ENCODE measurements at regions of chr16 and their contacts with region 1.

Region 1: DNA sequence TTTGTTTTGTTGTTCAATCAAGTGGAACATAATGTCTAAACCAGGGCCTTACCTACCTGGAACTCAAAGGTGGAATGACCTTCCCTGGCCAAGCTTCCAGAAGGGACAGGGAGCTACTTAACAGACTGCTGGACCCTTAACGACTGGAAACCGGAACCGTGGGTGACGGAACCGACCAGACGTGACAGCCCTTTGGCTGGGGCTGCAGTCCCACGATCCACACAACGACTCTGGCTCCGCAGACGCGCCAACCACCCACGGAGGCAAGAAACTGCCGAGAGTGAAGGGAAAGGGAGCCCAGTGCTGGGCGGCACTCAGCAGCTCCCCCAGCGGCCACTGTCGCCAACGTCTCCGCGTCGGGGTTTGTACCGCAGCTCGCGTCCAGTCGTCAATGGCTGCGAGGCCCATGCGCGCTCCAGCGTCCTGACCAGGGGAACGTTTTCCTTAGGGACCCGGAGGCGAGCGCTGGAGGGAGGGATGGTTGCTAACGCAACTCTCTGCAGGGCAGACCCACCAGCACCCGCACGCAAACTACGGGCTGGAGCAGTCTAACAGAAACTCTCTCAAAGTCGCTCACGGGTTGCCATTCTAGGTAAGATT is 5.5 kb upstream of the KIF22 start:
- DNase-seq: peak; percentile 84
- ATAC-seq: peak; percentile 91
- H3K4me3 Mint-ChIP-seq: peak overlapping the region; percentile 58
- H3K27ac Mint-ChIP-seq: peak overlapping the region; percentile 66
- H3K4me1 Mint-ChIP-seq: peaks cover 32% of the 10 kb centered on the region
- H3K27me3 Mint-ChIP-seq: no peaks in the 10 kb centered on the region
- CTCF ChIP-seq: peak; percentile 91

Region 2: GRCh38 chr16:29665294-29666077 is 119.5 kb before region 1 on chr16:
- CTCF ChIA-PET with region 1: no interaction called
- POLR2A ChIA-PET with region 1: no interaction called
- intact Hi-C with region 1: no loop called
- DNase-seq: peak; percentile 56
- ATAC-seq: no peak
- H3K4me3 Mint-ChIP-seq: peak overlapping the region; percentile 93
- H3K27ac Mint-ChIP-seq: peak overlapping the region; percentile 95
- H3K4me1 Mint-ChIP-seq: peaks cover 40% of the 10 kb centered on the region
- H3K27me3 Mint-ChIP-seq: no peaks in the 10 kb centered on the region
- CTCF ChIP-seq: no peak

Region 3: GRCh38 chr16:29738514-29738913 is 46.5 kb before region 1 on chr16:
- CTCF ChIA-PET with region 1: interaction called, 15 read pairs
- POLR2A ChIA-PET with region 1: interaction called, 8 read pairs
- intact Hi-C with region 1: loop called (anchors 5 kb)
- DNase-seq: peak; percentile 59
- ATAC-seq: peak; percentile 89
- H3K4me3 Mint-ChIP-seq: no peak overlapping the region
- H3K27ac Mint-ChIP-seq: peak overlapping the region; percentile 89
- H3K4me1 Mint-ChIP-seq: peaks cover 70% of the 10 kb centered on the region
- H3K27me3 Mint-ChIP-seq: no peaks in the 10 kb centered on the region
- CTCF ChIP-seq: no peak

Region 4: DNA sequence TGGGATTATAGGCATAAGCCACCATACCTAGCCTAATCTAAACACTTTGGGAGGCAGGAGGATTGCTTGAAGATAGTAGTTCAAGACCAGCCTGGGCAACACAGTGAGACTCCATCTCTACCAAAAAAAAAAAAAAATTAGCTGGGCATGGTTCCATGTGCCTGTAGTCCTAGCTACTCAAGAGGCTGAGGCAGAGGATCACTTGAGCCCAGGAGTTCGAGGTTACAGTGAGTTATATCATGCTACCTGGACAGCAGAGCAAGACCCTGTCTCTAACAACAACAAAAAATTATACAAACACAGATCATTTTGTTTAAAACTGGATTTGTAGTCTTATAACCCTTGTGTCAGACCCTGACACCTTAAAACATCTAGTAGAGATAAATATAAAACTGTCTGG is 31.5 kb before region 1 on chr16:
- CTCF ChIA-PET with region 1: interaction called, 15 read pairs
- POLR2A ChIA-PET with region 1: interaction called, 4 read pairs
- intact Hi-C with region 1: no loop called
- DNase-seq: no peak
- ATAC-seq: no peak
- H3K4me3 Mint-ChIP-seq: no peak overlapping the region
- H3K27ac Mint-ChIP-seq: peak overlapping the region; percentile 18
- H3K4me1 Mint-ChIP-seq: peaks cover 24% of the 10 kb centered on the region
- H3K27me3 Mint-ChIP-seq: no peaks in the 10 kb centered on the region
- CTCF ChIP-seq: no peak

Region 5: DNA sequence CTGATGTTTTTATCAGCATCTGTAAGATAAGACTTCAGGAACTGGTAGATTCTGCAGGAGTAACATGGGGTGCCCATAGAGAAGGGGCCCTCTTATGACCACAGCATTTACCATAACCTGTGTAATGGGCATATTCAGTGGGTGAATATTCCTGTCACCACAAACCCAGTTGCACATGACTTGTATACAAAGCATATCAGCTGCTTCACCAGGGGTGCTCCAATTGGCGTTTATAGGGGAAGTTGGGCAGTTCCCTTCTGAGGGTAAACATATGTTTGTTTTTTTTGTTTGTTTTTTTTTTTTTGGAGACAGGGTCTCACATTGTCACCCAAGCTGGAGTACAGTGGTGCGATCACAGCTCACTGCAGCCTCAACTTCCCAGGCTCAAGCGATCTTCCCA is 18.4 kb before region 1 on chr16:
- CTCF ChIA-PET with region 1: interaction called, 13 read pairs
- POLR2A ChIA-PET with region 1: interaction called, 4 read pairs
- intact Hi-C with region 1: no loop called
- DNase-seq: no peak
- ATAC-seq: no peak
- H3K4me3 Mint-ChIP-seq: no peak overlapping the region
- H3K27ac Mint-ChIP-seq: no peak overlapping the region
- H3K4me1 Mint-ChIP-seq: peaks cover 3% of the 10 kb centered on the region
- H3K27me3 Mint-ChIP-seq: no peaks in the 10 kb centered on the region
- CTCF ChIP-seq: no peak

Region 6: GRCh38 chr16:29774730-29775129 is 10.3 kb before region 1 on chr16:
- CTCF ChIA-PET with region 1: interaction called, 10 read pairs
- POLR2A ChIA-PET with region 1: interaction called, 6 read pairs
- intact Hi-C with region 1: no loop called
- DNase-seq: no peak
- ATAC-seq: no peak
- H3K4me3 Mint-ChIP-seq: no peak overlapping the region
- H3K27ac Mint-ChIP-seq: no peak overlapping the region
- H3K4me1 Mint-ChIP-seq: peaks cover 15% of the 10 kb centered on the region
- H3K27me3 Mint-ChIP-seq: no peaks in the 10 kb centered on the region
- CTCF ChIP-seq: no peak

Region 7: GRCh38 chr16:29805378-29806098 is 20.5 kb after region 1 on chr16:
- CTCF ChIA-PET with region 1: interaction called, 13 read pairs
- POLR2A ChIA-PET with region 1: interaction called, 89 read pairs
- intact Hi-C with region 1: no loop called
- DNase-seq: peak; percentile 99
- ATAC-seq: peak; percentile 74
- H3K4me3 Mint-ChIP-seq: peak overlapping the region; percentile 90
- H3K27ac Mint-ChIP-seq: peak overlapping the region; percentile 96
- H3K4me1 Mint-ChIP-seq: peaks cover 27% of the 10 kb centered on the region
- H3K27me3 Mint-ChIP-seq: no peaks in the 10 kb centered on the region
- CTCF ChIP-seq: no peak

Region 8: GRCh38 chr16:29815793-29816693 is 31.0 kb after region 1 on chr16 and contains the start of gene PAGR1:
- CTCF ChIA-PET with region 1: interaction called, 10 read pairs
- POLR2A ChIA-PET with region 1: interaction called, 8 read pairs
- intact Hi-C with region 1: no loop called
- DNase-seq: peak; percentile 99
- ATAC-seq: peak; percentile 74
- H3K4me3 Mint-ChIP-seq: peak within 1 kb of the TSS; percentile 98
- H3K27ac Mint-ChIP-seq: peak within 1 kb of the TSS; percentile 95
- H3K4me1 Mint-ChIP-seq: peaks cover 69% of the 10 kb centered on the region
- H3K27me3 Mint-ChIP-seq: no peaks in the 10 kb centered on the region
- CTCF ChIP-seq: peak; percentile 94
- total RNA-seq, gene PAGR1: 26.8 to 29.0 TPM

Region 9: DNA sequence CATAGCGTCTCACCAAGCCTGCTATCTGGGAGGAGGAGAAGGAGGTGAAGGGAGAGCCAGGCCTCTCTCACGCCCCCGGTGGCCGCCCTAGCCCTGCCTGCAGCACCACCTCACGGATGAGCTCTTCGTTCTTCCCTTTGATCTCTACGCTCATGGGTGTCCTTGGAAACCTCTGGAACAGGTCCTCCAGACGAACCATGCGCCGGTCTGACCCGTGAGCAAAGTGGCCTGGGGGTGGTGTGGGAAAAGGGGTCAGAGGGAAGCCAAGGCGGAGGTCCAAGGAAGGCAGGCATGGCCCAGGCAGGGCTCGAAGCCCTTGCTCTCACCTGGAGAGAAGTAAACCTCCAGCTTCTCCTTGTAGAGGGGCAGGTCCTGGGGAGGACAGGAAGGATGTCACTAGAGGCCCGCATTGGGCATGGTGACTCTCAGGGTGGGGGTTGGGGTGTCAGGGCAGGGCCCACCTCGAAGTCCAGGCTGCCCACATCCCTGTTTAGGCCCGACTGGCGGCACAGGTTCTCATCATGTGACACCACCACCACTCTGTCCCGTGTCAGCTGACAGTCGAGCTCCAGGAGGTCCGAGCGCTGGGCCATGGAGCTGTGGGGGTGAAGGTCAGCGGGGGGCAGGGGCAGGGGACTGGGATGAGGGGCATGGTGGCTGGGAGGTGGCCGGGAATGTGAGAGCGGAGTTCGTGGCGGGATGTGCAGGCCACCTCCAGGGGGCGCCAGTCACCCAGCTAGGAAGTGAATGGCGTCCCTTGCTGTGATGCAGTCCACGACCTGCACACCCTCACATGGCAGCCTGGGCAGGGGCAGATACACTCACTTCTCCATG is 327.4 kb after region 1 on chr16:
- CTCF ChIA-PET with region 1: no interaction called
- POLR2A ChIA-PET with region 1: no interaction called
- intact Hi-C with region 1: no loop called
- DNase-seq: peak; percentile 75
- ATAC-seq: peak; percentile 79
- H3K4me3 Mint-ChIP-seq: no peak overlapping the region
- H3K27ac Mint-ChIP-seq: no peak overlapping the region
- H3K4me1 Mint-ChIP-seq: peaks cover 6% of the 10 kb centered on the region
- H3K27me3 Mint-ChIP-seq: no peaks in the 10 kb centered on the region
- CTCF ChIP-seq: peak; percentile 92

Measured in activated CD8-positive, alpha-beta T cell treated with anti-CD3 and anti-CD28 coated beads for 36 hours (primary cell).